ENCODE measurements at regions of chr3 and their contacts with region 1.

Region 1: DNA sequence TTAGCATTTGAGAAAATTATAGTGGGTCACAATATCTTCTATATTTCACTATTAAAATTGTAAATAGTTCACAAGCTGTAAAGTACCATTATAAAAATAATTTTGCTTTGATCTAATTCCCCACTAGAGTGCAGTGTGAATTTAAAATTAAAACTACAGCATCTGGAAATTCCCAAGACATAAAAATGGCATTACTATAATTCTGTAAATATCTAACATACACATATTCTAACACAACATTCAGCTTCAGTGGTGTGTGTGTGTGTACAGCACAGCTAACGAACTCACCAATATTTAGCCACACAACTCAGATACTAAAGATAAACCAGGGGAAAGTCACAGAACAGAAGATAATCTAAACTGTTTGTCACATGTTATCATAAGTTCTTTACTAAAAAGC is 424.9 kb upstream of the ZNF385D start:
- DNase-seq: no peak
- H3K4me3 ChIP-seq: no peak overlapping the region
- H3K27ac ChIP-seq: no peak overlapping the region
- H3K4me1 ChIP-seq: no peaks in the 10 kb centered on the region
- H3K27me3 ChIP-seq: no peaks in the 10 kb centered on the region
- CTCF ChIP-seq: no peak

Region 2: DNA sequence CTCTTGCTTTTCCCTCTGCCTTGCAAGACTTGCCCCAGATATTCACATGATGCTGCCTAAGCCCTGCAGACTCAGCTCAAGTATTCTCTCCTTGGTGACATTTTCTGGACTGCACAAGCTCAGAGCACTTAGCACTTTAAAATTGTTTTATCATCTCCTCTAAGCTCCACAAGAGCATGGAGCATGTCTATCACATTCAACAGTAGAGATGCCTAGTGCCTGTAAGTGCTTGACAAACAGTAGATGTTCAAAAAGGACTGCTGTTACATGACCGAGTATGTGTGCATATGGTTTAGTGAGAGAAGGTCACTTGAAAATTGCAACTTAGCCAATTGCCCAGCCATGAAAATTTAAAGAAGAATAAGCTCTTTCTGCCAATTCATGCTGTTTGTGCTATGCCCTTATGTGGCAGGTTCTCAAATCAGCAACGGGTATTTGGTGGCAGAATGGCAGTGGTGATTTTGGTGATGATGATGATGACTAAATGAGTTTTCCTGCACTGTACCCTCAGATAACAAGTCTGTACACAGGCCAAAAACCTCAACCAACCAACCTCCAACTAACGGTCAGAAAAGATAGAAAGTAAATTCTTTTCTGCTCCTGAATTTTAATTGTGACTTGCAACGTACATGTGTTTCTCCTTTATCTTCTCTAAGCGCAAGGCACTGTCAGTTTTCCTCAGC is 379.9 kb after region 1 on chr3:
- CTCF ChIA-PET with region 1: no interaction called
- dilution Hi-C with region 1: no loop called
- in situ Hi-C with region 1: no loop called
- intact Hi-C with region 1: loop called (anchors 5 kb)
- DNase-seq: no peak
- H3K4me3 ChIP-seq: no peak overlapping the region
- H3K27ac ChIP-seq: no peak overlapping the region
- H3K4me1 ChIP-seq: no peaks in the 10 kb centered on the region
- H3K27me3 ChIP-seq: peaks cover 4% of the 10 kb centered on the region
- CTCF ChIP-seq: no peak